Sciatic nerve (tissue), 2 donors: ENCODE measurements at regions of chr4 and their contacts with region 1.

Region 1: DNA sequence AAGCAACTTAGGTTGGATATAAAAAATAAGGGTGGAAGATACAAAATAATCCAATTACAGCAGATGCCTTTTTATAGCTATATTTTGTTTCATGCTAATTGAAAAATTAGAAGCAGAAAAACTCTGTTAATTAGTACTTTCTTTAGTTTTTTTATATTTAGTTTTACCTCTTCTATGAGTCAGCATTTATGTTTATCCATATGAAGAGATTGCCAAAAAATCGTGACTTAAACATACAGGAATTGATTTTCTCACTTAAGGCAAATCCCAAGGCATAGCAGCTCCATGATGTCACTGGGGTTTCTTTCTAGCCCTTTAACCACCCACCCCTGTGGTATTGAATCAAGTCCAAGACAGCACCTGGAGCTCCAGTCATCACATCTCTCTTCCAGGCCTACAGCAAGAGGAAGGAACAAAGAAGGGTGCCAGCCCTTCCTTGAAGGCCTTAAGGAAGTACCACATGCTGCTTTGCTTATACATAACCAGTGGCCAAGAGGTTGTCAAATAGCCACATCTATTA is 365.8 kb upstream of the TENM3 start:
- DNase-seq: no peak
- ATAC-seq: no peak

Region 2: GRCh38 chr4:181845617-181846016 is 31.8 kb before region 1 on chr4:
- intact Hi-C with region 1: no loop called
- DNase-seq: no peak
- ATAC-seq: no peak

Region 3: GRCh38 chr4:181863856-181864255 is 13.5 kb before region 1 on chr4:
- intact Hi-C with region 1: loop called (anchors 1 kb)
- DNase-seq: no peak
- ATAC-seq: no peak